ENCODE measurements at regions of chr6 and their contacts with region 1.

Region 1: DNA sequence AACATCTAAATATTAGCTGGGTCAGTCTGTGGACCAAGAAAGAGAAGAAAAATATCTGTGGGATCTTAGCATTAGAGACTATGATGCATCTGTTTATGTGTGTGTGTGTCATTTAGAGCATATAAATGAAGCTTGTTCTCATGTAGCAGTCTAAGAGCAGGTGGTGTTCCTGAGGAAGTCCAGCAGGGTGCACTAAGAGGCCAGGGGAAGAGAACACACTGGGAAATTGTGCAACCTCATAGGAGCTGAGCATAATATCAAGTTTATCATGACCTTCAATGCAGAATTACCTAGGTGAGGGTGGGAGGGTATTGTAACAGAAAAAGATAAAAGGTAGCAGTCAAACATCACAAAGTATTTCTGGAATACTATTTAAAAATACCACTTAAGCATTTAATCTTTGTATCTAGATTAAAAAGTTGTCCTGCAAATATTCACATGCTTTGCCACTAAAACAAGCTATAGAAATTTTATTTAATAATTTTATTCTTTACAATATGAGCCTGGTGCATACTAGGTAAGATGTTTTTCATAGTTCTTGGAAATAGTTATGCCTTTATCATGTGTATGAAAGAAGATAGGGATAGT is 80.5 kb downstream of the SMPDL3A start:
- DNase-seq: no peak
- ATAC-seq: peak; percentile 90
- H3K4me3 ChIP-seq: no peak overlapping the region
- H3K27ac ChIP-seq: no peak overlapping the region
- H3K4me1 ChIP-seq: no peaks in the 10 kb centered on the region
- H3K27me3 ChIP-seq: no peaks in the 10 kb centered on the region
- CTCF ChIP-seq: peak; percentile 49 to 62 (median 62); a peak in 4 of 6 replicates
- EP300 ChIP-seq: no peak
- POLR2A ChIP-seq: no peak
- RAD21 ChIP-seq: peak; percentile 81

Region 2: DNA sequence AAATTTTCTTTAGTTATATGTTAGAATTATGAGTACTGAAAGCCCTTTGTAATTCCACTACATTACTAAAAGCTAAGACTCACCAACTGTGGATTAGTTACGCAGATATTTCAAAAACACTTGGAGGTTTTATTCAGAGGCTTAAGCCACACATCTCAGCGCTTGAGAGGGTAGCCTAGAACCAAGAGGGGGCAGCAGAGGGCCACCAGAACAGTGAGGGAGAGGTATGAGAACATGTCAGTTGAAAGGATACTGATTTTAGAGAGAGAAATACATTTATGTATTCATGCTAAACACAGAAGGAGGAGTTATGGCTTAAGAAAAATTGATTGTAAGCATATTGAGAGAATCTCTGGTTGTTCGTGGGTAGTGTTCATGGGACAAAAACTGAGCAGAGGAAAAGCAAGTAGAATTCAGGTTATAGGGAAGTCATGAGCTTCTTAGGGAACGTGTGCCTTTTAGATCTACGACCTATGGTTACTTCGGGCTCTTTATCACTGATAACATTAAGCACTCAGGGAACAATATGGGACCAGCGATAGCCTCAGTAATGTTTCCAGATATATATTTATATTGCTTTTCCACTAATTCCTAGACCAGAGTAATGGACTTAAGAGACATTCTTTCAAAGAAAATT is 377.5 kb before region 1 on chr6:
- CTCF ChIA-PET with region 1: interaction called, 10 read pairs
- POLR2A ChIA-PET with region 1: no interaction called
- RAD21 ChIA-PET with region 1: interaction called, 3 read pairs
- SMC1A ChIA-PET with region 1: no interaction called
- in situ Hi-C with region 1: no loop called
- intact Hi-C with region 1: no loop called
- DNase-seq: no peak
- ATAC-seq: peak; percentile 100
- H3K4me3 ChIP-seq: no peak overlapping the region
- H3K27ac ChIP-seq: no peak overlapping the region
- H3K4me1 ChIP-seq: no peaks in the 10 kb centered on the region
- H3K27me3 ChIP-seq: no peaks in the 10 kb centered on the region
- CTCF ChIP-seq: peak; percentile 82 to 92 (median 87)
- EP300 ChIP-seq: no peak
- POLR2A ChIP-seq: no peak
- RAD21 ChIP-seq: peak; percentile 86

Region 3: DNA sequence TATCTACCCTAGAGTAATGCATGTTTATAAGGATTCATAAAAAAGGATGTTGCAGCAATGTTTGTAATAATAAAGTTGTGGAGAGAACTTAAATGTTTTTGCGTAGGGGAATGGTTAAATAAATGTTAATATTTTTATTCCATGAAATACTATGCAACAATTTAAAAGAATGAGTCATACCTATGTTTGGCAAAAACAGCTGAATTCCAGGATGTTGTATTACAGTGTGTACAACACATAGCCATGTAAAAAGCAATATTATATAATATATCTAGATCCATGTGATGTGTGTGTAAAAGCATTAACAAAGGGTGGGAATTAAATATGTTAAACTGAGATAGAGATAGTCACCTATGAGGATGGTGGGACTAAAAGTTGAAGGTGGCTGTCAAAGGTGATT is 280.4 kb before region 1 on chr6:
- CTCF ChIA-PET with region 1: no interaction called
- POLR2A ChIA-PET with region 1: no interaction called
- RAD21 ChIA-PET with region 1: no interaction called
- SMC1A ChIA-PET with region 1: no interaction called
- in situ Hi-C with region 1: no loop called
- intact Hi-C with region 1: no loop called
- DNase-seq: no peak
- ATAC-seq: no peak
- H3K4me3 ChIP-seq: no peak overlapping the region
- H3K27ac ChIP-seq: no peak overlapping the region
- H3K4me1 ChIP-seq: no peaks in the 10 kb centered on the region
- H3K27me3 ChIP-seq: no peaks in the 10 kb centered on the region
- CTCF ChIP-seq: no peak
- EP300 ChIP-seq: no peak
- POLR2A ChIP-seq: no peak
- RAD21 ChIP-seq: no peak

Region 4: DNA sequence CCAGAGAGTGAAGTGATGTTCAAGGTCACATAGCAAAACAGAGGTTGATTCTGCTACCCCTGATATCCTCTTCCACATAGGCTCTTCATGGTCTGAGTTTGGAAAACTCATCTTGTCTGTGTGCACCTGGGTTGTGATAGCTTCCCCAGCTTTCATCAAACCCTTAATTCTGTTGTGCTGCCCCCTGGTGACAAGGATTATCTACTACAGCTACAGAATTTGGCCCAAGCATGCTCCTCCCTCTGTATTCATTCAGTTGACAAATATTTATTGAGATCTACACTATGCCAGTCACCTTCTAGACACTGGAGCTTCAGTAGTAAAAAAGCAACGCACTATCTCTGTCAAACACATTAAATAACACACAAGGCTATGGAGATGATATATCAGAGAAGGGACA is 30.1 kb before region 1 on chr6:
- CTCF ChIA-PET with region 1: interaction called, 20 read pairs
- POLR2A ChIA-PET with region 1: no interaction called
- RAD21 ChIA-PET with region 1: interaction called, 8 read pairs
- SMC1A ChIA-PET with region 1: interaction called, 12 read pairs
- in situ Hi-C with region 1: no loop called
- intact Hi-C with region 1: no loop called
- DNase-seq: no peak
- ATAC-seq: peak; percentile 93
- H3K4me3 ChIP-seq: no peak overlapping the region
- H3K27ac ChIP-seq: no peak overlapping the region
- H3K4me1 ChIP-seq: no peaks in the 10 kb centered on the region
- H3K27me3 ChIP-seq: peaks cover 0 to 3% of the 10 kb centered on the region in 2 experiments; a peak in 1 of 4 replicates
- CTCF ChIP-seq: peak; percentile 59 to 68 (median 64); a peak in 5 of 6 replicates
- EP300 ChIP-seq: no peak
- POLR2A ChIP-seq: no peak
- RAD21 ChIP-seq: peak; percentile 58

Region 5: DNA sequence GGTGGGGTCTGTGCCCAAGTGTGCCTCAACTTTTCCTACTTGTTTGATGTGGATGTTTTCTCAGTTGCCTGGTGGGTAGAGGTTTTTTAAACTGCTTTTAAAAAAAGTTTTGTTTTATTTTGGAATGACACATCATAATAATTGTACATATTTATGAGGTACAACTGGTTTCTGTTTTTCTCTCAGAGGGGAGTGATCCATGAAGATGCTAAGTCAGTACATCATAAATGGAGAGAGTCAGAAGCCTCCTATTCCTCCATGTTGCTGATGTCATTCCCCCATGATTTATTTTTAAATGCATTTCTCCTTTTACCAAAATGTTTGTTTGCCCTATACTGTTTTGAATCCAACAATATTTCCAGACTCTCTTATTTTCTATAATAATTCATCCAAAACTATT is 49.2 kb after region 1 on chr6:
- CTCF ChIA-PET with region 1: interaction called, 10 read pairs
- POLR2A ChIA-PET with region 1: no interaction called
- RAD21 ChIA-PET with region 1: interaction called, 3 read pairs
- SMC1A ChIA-PET with region 1: interaction called, 5 read pairs
- in situ Hi-C with region 1: no loop called
- intact Hi-C with region 1: no loop called
- DNase-seq: no peak
- ATAC-seq: no peak
- H3K4me3 ChIP-seq: no peak overlapping the region
- H3K27ac ChIP-seq: no peak overlapping the region
- H3K4me1 ChIP-seq: no peaks in the 10 kb centered on the region
- H3K27me3 ChIP-seq: no peaks in the 10 kb centered on the region
- CTCF ChIP-seq: no peak
- EP300 ChIP-seq: no peak
- POLR2A ChIP-seq: no peak
- RAD21 ChIP-seq: no peak

Region 6: GRCh38 chr6:122969999-122970533 is 100.5 kb after region 1 on chr6:
- CTCF ChIA-PET with region 1: interaction called, 16 read pairs
- POLR2A ChIA-PET with region 1: no interaction called
- RAD21 ChIA-PET with region 1: interaction called, 6 read pairs
- SMC1A ChIA-PET with region 1: interaction called, 24 read pairs
- in situ Hi-C with region 1: no loop called
- intact Hi-C with region 1: no loop called
- DNase-seq: no peak
- ATAC-seq: no peak
- H3K4me3 ChIP-seq: no peak overlapping the region
- H3K27ac ChIP-seq: no peak overlapping the region
- H3K4me1 ChIP-seq: no peaks in the 10 kb centered on the region
- H3K27me3 ChIP-seq: no peaks in the 10 kb centered on the region
- CTCF ChIP-seq: no peak
- EP300 ChIP-seq: no peak
- POLR2A ChIP-seq: no peak
- RAD21 ChIP-seq: no peak

Region 7: GRCh38 chr6:123044341-123044860 is 174.9 kb after region 1 on chr6:
- CTCF ChIA-PET with region 1: interaction called, 23 read pairs
- POLR2A ChIA-PET with region 1: no interaction called
- RAD21 ChIA-PET with region 1: interaction called, 8 read pairs
- SMC1A ChIA-PET with region 1: interaction called, 18 read pairs
- in situ Hi-C with region 1: no loop called
- intact Hi-C with region 1: no loop called
- DNase-seq: no peak
- ATAC-seq: no peak
- H3K4me3 ChIP-seq: no peak overlapping the region
- H3K27ac ChIP-seq: no peak overlapping the region
- H3K4me1 ChIP-seq: no peaks in the 10 kb centered on the region
- H3K27me3 ChIP-seq: no peaks in the 10 kb centered on the region
- CTCF ChIP-seq: no peak
- EP300 ChIP-seq: no peak
- POLR2A ChIP-seq: no peak
- RAD21 ChIP-seq: no peak

Region 8: GRCh38 chr6:123323452-123324329 is 454.2 kb after region 1 on chr6:
- CTCF ChIA-PET with region 1: interaction called, 175 read pairs
- POLR2A ChIA-PET with region 1: no interaction called
- RAD21 ChIA-PET with region 1: interaction called, 91 read pairs
- SMC1A ChIA-PET with region 1: interaction called, 77 read pairs
- in situ Hi-C with region 1: loop called (anchors 10 kb)
- intact Hi-C with region 1: loop called (anchors 1 kb)
- DNase-seq: no peak
- ATAC-seq: no peak
- H3K4me3 ChIP-seq: no peak overlapping the region
- H3K27ac ChIP-seq: no peak overlapping the region
- H3K4me1 ChIP-seq: no peaks in the 10 kb centered on the region
- H3K27me3 ChIP-seq: no peaks in the 10 kb centered on the region
- CTCF ChIP-seq: no peak
- EP300 ChIP-seq: no peak
- POLR2A ChIP-seq: no peak
- RAD21 ChIP-seq: no peak

Measured in GM12878 (cell line).